AG04449 (cell line): ENCODE measurements at regions of chr3 and their contacts with region 1.

Region 1: GRCh38 chr3:132034486-132035464 is at the start of gene CPNE4:
- DNase-seq: no peak
- H3K4me3 ChIP-seq: peak within 1 kb of the TSS; percentile 36
- CTCF ChIP-seq: peak; percentile 97

Region 2: DNA sequence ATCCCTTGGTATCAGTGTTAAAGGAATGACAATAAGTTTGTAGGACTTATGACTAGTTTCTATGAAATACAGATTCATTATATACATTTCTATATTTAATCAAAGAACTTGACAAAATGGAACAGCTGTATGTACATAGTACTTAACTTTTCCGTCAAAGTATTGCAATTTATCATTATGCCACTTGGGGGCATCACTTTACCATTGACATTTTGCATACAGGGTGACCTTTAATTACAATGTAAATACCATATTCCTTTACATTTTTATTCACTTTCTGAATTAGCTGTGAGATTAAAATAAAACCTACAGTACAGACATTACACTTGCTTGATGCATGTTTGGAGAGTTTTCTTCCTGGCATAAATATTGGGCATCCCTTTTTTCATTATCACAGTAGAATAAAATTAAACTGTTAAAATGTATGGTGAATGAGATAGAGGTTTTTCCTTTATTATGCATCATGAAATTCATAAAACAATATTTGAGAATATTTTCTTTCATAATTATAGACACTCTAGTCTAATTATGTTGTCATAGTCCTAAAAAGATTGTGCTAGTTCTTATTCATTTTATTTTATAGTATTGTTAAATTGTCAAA is 1001.2 kb before region 1 on chr3:
- CTCF ChIA-PET with region 1: interaction called, 10 read pairs
- POLR2A ChIA-PET with region 1: no interaction called
- DNase-seq: no peak
- H3K4me3 ChIP-seq: no peak overlapping the region
- CTCF ChIP-seq: peak; percentile 40

Region 3: GRCh38 chr3:132047209-132047608 is 12.4 kb after region 1 on chr3:
- CTCF ChIA-PET with region 1: interaction called, 21 read pairs
- POLR2A ChIA-PET with region 1: no interaction called
- DNase-seq: no peak
- H3K4me3 ChIP-seq: no peak overlapping the region
- CTCF ChIP-seq: no peak

Region 4: DNA sequence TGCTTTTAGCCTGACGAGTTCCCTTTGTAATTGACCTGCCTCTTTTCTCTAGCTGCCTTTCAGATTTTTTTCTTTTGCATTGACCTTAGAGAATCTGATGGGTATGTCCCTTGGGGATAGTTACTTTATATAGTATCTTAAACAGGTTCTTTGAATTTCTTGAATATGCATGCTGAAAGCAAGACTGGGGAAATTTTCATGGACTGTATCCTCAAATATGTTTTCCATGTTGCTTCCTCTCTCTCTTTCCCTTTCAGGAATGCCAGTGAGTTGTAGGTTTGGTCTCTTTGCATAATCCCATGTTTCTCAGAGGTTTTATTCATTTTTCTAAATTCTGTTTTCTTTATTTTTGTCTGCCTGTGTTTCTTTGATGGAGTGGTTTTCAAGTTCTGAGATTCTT is 81.8 kb after region 1 on chr3:
- CTCF ChIA-PET with region 1: no interaction called
- POLR2A ChIA-PET with region 1: no interaction called
- DNase-seq: no peak
- H3K4me3 ChIP-seq: no peak overlapping the region
- CTCF ChIP-seq: no peak

Region 5: DNA sequence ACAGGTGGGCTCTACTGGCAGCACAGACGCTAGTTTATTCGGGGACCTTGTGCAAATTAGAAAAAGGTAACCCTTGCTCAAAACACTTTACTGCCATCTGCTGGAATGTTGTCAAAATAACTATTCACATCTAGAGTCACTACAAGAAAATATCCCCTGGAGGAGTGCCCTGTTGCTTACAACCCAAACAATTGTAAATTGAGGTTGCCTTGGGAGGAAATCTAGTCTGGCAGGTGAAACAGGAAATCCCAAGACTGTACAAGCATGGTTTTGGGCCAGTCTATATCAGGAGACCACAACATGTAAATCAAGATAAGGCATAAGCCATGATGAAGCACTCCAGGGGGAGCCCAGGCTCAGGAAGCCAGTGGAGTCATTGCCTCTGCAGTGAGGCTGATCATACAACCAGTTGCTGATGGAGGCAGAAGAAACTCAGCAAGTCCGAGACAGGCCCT is 145.6 kb after region 1 on chr3:
- CTCF ChIA-PET with region 1: interaction called, 454 read pairs
- POLR2A ChIA-PET with region 1: no interaction called
- DNase-seq: peak; percentile 7
- H3K4me3 ChIP-seq: no peak overlapping the region
- CTCF ChIP-seq: peak; percentile 24

Region 6: DNA sequence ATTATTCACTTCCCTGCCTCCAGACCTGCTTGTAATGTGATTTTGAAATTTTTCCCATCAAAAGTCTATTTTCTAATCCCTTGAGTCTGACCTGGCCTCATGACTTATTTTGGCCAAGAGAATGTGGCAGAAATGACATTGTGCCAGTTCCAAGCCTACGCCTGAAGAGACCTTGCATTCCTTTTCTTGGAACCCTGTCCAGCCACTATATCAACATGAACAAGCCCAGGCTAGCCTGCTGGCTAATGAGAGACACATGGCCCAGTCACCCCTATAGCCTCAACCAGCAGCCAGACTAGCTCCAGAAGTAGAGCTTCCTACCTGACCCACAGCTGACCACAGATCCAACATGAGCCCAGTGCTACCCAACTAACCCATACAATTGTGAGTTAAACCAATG is 161.3 kb after region 1 on chr3:
- CTCF ChIA-PET with region 1: interaction called, 11 read pairs
- POLR2A ChIA-PET with region 1: no interaction called
- DNase-seq: no peak
- H3K4me3 ChIP-seq: no peak overlapping the region
- CTCF ChIP-seq: no peak

Region 7: GRCh38 chr3:132268956-132269355 is 234.2 kb after region 1 on chr3:
- CTCF ChIA-PET with region 1: interaction called, 10 read pairs
- POLR2A ChIA-PET with region 1: no interaction called
- DNase-seq: no peak
- H3K4me3 ChIP-seq: no peak overlapping the region
- CTCF ChIP-seq: peak; percentile 12

Region 8: DNA sequence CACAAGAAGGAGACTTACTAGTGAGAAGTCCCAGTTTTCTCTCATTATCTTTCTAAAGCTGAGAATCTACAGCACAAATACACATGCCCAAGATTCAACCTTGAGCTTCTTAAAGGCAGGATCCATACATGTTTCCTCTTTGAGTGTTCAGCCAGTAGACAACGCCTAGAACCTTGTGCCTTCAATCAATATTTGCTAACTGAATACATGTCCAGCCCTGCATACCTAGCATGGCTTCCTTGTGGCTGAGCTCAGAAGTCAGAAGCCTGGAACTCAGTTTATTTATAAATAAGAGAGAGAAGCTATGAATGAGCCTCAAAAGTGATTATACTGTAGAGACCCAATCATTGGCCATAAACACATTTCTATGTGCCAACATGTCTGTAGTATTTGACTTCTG is 325.9 kb after region 1 on chr3:
- CTCF ChIA-PET with region 1: no interaction called
- POLR2A ChIA-PET with region 1: no interaction called
- DNase-seq: no peak
- H3K4me3 ChIP-seq: no peak overlapping the region
- CTCF ChIP-seq: no peak

Region 9: DNA sequence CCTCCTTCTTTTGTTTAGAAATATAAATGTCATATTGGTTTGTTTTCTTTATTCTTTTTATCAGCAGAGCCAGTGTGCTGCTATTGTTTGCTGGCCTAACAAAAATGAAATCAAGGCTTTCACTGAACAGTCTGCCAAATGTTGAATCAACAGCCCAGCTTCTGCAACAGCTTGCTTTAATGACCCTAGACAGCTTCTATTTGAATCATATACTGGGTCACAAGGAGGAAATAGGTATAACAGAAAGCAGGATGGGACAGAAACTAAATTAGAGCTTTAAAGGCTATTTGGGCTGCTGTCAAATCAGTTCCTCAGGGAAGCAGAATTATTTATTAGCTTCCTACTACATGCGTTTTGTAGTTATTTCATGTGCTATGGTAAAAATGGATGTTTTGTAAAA is 370.4 kb after region 1 on chr3:
- CTCF ChIA-PET with region 1: no interaction called
- POLR2A ChIA-PET with region 1: no interaction called
- DNase-seq: no peak
- H3K4me3 ChIP-seq: no peak overlapping the region
- CTCF ChIP-seq: no peak